ENCODE measurements at regions of chr9 and their contacts with region 1.

Region 1: DNA sequence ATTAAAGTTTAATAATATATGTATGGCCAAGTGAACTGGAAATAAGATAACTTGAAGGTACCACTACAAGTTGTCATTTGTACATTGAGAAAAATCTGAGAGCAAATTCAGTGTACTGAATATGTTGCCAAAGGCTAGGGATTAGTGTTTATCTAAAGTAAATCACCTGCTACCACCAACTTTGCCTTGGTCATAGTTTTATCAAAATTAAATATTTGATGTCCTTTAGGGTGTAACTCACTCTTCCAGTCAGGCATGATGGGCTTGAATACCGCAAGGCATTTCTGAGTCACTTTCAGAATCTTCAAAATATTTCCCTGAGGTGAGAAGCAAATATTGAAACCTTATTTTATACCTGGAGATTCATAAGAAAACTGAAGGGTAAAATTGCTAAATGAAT is 1338.7 kb upstream of the ACO1 start:
- DNase-seq: peak; percentile 16
- H3K4me3 Mint-ChIP-seq: no peak overlapping the region
- H3K27ac Mint-ChIP-seq: no peak overlapping the region
- H3K4me1 Mint-ChIP-seq: peaks cover 23% of the 10 kb centered on the region
- H3K27me3 Mint-ChIP-seq: no peaks in the 10 kb centered on the region
- CTCF ChIP-seq: no peak

Region 2: GRCh38 chr9:30010691-30011090 is 1035.1 kb before region 1 on chr9:
- CTCF ChIA-PET with region 1: no interaction called
- intact Hi-C with region 1: no loop called
- DNase-seq: no peak
- H3K4me3 Mint-ChIP-seq: no peak overlapping the region
- H3K27ac Mint-ChIP-seq: no peak overlapping the region
- H3K4me1 Mint-ChIP-seq: no peaks in the 10 kb centered on the region
- H3K27me3 Mint-ChIP-seq: no peaks in the 10 kb centered on the region
- CTCF ChIP-seq: no peak

Region 3: GRCh38 chr9:30967484-30967883 is 78.3 kb before region 1 on chr9:
- CTCF ChIA-PET with region 1: no interaction called
- intact Hi-C with region 1: no loop called
- DNase-seq: no peak
- H3K4me3 Mint-ChIP-seq: no peak overlapping the region
- H3K27ac Mint-ChIP-seq: no peak overlapping the region
- H3K4me1 Mint-ChIP-seq: no peaks in the 10 kb centered on the region
- H3K27me3 Mint-ChIP-seq: no peaks in the 10 kb centered on the region
- CTCF ChIP-seq: no peak

Region 4: DNA sequence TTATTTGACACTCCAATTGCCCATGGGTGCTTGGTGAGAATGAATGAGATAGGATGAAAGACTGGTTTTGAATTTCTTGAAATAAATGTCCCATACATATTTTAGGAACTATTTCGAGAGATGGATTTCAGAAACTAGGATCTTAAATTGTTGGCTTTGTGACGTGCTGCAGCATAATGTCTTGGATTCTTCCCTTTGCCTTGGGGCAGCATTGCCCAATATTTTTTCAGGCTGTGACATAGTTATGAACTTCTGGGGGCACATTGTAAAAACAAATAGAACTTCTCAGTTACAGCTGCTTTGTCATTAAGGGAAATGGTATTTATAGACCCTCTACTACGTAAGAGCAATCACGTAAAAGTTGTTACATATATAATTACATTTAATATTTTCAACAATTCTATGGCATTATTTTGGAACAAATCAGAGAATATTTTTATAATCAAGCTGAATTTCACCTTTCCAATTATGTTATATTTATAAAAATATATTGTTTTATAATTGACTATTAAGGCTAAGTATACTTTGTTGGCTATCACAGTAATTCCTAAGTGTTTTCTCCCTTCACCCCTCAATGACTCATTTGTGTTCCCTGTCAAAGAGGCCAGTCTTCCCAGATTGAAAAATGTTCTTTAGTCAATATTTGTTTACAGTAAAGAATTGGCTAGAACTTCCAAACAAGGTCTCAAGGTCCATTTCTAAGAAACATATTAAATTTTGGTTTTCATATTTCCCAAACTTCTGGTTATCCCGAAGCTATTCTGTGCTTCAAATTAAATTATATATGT is 49.6 kb before region 1 on chr9:
- CTCF ChIA-PET with region 1: no interaction called
- intact Hi-C with region 1: loop called (anchors 5 kb)
- DNase-seq: no peak
- H3K4me3 Mint-ChIP-seq: no peak overlapping the region
- H3K27ac Mint-ChIP-seq: no peak overlapping the region
- H3K4me1 Mint-ChIP-seq: no peaks in the 10 kb centered on the region
- H3K27me3 Mint-ChIP-seq: no peaks in the 10 kb centered on the region
- CTCF ChIP-seq: no peak

Region 5: DNA sequence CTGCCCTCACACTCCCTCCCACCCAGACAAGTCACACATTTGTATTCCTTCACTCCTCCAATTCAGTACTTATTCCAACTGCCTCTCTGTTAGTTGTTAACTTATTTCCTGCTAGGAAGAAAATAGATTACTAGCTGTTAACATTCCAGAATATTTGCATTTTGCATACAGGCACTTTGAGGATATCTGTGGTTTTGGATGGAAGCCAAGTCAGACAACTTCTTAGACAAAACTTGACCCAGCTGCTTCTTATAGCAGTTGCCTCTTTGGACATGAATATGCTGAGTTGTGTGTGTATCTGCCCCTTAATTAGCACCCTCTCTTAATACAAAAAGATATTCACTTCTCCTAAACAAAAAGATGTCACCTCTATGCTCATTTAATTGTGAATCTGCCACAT is 58.0 kb after region 1 on chr9:
- CTCF ChIA-PET with region 1: no interaction called
- intact Hi-C with region 1: loop called (anchors 5 kb)
- DNase-seq: peak; percentile 10
- H3K4me3 Mint-ChIP-seq: no peak overlapping the region
- H3K27ac Mint-ChIP-seq: no peak overlapping the region
- H3K4me1 Mint-ChIP-seq: peaks cover 19% of the 10 kb centered on the region
- H3K27me3 Mint-ChIP-seq: no peaks in the 10 kb centered on the region
- CTCF ChIP-seq: no peak

Region 6: DNA sequence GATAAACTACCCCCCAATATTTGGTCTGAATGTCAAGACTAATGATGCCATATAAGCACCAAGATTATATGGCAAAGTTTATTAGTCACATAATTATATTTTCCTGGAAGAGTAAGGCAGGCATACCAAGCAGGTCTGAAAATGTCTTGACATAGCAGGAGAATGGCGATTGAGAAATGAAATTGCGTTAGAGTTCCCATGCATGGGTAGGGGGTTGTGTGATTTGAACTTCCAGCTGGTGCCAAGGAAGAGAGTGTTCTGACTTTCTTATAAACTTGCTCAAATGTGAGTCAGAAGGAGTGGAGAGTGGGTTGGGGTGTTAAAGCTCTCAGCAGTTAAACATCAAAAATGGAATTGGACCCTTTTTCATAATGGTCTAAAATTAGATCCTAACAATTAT is 138.1 kb after region 1 on chr9:
- CTCF ChIA-PET with region 1: no interaction called
- intact Hi-C with region 1: no loop called
- DNase-seq: no peak
- H3K4me3 Mint-ChIP-seq: no peak overlapping the region
- H3K27ac Mint-ChIP-seq: no peak overlapping the region
- H3K4me1 Mint-ChIP-seq: no peaks in the 10 kb centered on the region
- H3K27me3 Mint-ChIP-seq: no peaks in the 10 kb centered on the region
- CTCF ChIP-seq: no peak

Region 7: DNA sequence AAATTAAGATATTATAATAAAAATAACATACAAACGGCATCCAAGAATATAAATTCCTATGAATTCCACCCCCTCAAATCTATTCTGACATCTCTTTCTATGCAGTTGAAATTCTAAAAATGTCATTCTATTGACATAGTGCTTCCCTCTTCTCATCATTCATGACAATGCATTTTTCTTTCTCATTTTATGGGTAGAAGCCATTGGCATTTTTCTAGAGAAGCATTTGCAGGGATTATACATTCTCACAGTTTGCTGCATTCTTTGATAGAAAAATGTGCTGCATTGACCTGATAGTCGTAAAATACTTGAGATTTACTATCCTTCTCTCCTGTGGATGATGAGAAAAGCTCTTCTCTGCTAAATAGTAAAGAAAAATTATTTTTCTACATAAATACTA is 577.7 kb after region 1 on chr9:
- CTCF ChIA-PET with region 1: no interaction called
- intact Hi-C with region 1: no loop called
- DNase-seq: no peak
- H3K4me3 Mint-ChIP-seq: no peak overlapping the region
- H3K27ac Mint-ChIP-seq: no peak overlapping the region
- H3K4me1 Mint-ChIP-seq: peaks cover 16% of the 10 kb centered on the region
- H3K27me3 Mint-ChIP-seq: no peaks in the 10 kb centered on the region
- CTCF ChIP-seq: no peak

Measured in Calu3 (cell line).